A673 (cell line): ENCODE measurements at regions of chr9 and their contacts with region 1.

Region 1: DNA sequence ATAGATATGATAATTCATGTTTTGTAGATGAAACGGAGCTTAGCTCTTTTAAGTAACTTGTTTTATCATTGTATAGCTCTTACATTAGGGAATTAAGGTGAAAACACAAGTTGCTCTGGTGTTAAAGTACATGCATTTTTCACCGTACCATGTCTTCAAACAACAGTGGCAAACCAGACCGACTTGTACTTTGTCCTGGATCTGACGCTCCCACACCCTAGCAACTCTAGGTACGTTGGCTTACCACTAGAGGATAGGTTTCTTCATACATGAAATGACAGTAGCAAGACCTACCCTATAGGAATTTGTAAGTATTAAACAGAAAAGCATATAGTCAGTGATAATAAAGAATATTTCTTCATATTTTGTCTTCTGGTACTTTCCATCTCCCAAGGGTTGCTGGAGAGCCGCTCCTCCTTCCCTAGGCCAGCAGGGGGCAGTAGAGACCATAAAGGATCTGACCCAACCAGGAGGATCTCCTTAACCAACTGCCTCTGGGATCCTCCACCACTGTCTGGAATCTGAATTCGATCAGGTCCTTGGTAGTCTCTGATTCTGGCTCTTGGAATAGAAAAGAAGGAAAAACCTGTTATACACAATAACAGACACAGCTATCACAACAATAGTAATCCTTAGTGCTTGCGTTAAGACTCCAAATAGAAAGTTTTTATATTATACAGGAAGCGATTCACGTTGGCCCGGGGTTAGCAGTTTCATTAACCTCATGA is 136.7 kb downstream of the CAVIN4 start:
- DNase-seq: peak; percentile 80
- H3K4me3 ChIP-seq: peak overlapping the region; percentile 24
- H3K27ac ChIP-seq: no peak overlapping the region
- H3K4me1 ChIP-seq: no peaks in the 10 kb centered on the region
- H3K27me3 ChIP-seq: no peaks in the 10 kb centered on the region
- CTCF ChIP-seq: peak; percentile 95

Region 2: GRCh38 chr9:101119206-101119819 is 404.8 kb after region 1 on chr9:
- CTCF ChIA-PET with region 1: no interaction called
- POLR2A ChIA-PET with region 1: no interaction called
- intact Hi-C with region 1: loop called (anchors 10 kb)
- DNase-seq: peak; percentile 56
- H3K4me3 ChIP-seq: no peak overlapping the region
- H3K27ac ChIP-seq: no peak overlapping the region
- H3K4me1 ChIP-seq: no peaks in the 10 kb centered on the region
- H3K27me3 ChIP-seq: peaks cover 4% of the 10 kb centered on the region
- CTCF ChIP-seq: peak; percentile 80

Region 3: DNA sequence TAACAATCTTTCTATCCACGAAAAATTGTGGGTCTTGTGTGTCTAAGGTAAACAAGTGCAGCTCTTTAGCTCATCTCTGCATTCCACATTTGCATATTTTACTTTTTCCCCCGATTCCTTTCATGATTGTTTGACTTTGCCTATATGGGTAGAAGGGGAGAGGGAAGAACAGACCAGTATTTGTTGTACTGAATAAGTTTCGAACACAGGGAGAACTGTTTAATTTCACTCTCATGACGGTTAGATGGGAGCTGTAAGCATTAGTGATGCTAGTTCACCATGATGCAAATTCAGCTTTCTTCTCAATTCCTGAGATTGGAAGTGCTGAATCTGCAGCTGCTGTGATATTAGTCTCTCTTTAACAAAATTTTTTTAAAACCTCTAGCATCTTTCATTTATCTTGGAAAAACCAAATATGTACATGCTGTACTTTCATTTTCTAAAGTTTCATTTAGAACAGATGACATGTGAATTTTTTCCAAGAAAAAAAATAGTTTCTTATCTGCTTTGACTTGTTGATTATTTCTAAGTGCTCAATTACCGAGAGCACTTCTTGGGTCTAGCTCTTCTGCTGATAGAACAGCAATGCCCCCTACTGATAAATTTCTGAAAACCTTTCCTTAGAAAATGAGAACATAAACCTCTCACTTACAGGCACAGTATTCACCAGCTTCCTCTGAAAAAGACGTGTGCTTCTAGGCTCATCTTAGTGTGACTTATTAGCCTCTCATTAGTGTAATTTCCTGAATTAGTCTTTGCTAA is 520.8 kb after region 1 on chr9:
- CTCF ChIA-PET with region 1: no interaction called
- POLR2A ChIA-PET with region 1: no interaction called
- intact Hi-C with region 1: loop called (anchors 1 kb)
- DNase-seq: peak; percentile 49
- H3K4me3 ChIP-seq: no peak overlapping the region
- H3K27ac ChIP-seq: no peak overlapping the region
- H3K4me1 ChIP-seq: no peaks in the 10 kb centered on the region
- H3K27me3 ChIP-seq: no peaks in the 10 kb centered on the region
- CTCF ChIP-seq: peak; percentile 65

Region 4: DNA sequence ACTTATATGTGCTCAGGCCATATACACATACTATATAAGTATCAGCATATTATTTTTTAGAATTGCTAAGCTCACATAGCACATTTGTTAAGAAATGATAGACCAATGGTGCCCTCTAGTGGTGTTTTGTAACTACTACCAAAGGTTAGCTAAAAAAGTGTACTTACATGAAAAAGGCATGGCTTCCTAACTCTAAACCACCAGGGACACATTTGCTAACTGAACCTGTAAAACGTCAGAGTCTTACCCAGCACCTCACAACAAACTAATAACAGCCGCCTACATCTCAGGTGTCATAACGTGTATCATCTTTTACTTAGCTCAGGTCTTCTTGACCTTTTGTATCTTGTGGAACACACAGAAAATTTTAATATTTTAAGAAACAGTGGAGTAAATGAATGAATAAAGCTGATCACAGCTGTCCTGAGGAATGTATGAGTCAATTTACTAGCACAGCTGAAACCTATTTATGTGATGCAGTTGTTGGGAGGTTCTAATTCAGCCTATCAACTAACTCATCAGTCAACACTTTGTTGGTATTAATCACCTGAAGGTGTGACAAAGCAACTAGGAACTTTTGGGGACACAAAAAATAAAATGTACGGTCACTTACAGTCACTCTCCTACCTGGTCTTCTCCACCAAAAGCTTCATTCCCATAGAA is 597.4 kb after region 1 on chr9:
- CTCF ChIA-PET with region 1: interaction called, 5 read pairs
- POLR2A ChIA-PET with region 1: no interaction called
- intact Hi-C with region 1: loop called (anchors 1 kb)
- DNase-seq: peak; percentile 87
- H3K4me3 ChIP-seq: no peak overlapping the region
- H3K27ac ChIP-seq: no peak overlapping the region
- H3K4me1 ChIP-seq: peaks cover 18% of the 10 kb centered on the region
- H3K27me3 ChIP-seq: no peaks in the 10 kb centered on the region
- CTCF ChIP-seq: peak; percentile 73

Region 5: DNA sequence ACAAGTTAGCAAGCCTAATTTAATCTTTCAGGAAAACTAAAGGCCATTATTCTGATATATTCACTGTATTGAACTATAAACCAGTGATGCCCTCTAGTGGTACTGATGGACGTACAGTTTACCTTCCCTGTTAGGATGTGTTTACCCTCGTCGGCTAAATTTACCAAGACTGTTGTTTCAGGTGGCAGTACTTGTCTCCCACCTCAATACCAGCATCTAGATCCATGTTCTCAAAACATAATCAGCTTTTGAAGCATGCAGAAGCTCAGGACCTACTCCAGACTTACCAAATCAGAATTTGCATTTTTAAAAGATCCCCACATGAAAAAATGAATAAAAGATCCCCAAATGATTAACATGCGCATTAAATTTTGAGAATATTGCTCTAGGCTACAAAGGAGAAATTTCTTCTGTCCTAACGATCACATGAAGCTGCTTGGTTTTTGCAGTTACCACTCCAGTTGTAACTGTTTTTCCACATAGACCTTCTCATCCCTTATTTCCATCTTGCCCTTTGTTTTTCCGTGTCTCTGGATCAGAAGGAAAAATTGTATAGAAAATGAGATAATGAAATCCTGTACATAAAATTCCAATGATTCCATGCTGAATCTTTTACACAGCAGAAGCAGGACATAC is 673.5 kb after region 1 on chr9:
- CTCF ChIA-PET with region 1: no interaction called
- POLR2A ChIA-PET with region 1: no interaction called
- intact Hi-C with region 1: loop called (anchors 10 kb)
- DNase-seq: peak; percentile 70
- H3K4me3 ChIP-seq: no peak overlapping the region
- H3K27ac ChIP-seq: no peak overlapping the region
- H3K4me1 ChIP-seq: peaks cover 4% of the 10 kb centered on the region
- H3K27me3 ChIP-seq: no peaks in the 10 kb centered on the region
- CTCF ChIP-seq: peak; percentile 79

Region 6: GRCh38 chr9:101530077-101530711 is 815.7 kb after region 1 on chr9:
- CTCF ChIA-PET with region 1: no interaction called
- POLR2A ChIA-PET with region 1: no interaction called
- intact Hi-C with region 1: loop called (anchors 10 kb)
- DNase-seq: peak; percentile 80
- H3K4me3 ChIP-seq: no peak overlapping the region
- H3K27ac ChIP-seq: no peak overlapping the region
- H3K4me1 ChIP-seq: no peaks in the 10 kb centered on the region
- H3K27me3 ChIP-seq: peaks cover 9% of the 10 kb centered on the region
- CTCF ChIP-seq: peak; percentile 85